ENCODE measurements at regions of chr12 and their contacts with region 1.

Region 1: DNA sequence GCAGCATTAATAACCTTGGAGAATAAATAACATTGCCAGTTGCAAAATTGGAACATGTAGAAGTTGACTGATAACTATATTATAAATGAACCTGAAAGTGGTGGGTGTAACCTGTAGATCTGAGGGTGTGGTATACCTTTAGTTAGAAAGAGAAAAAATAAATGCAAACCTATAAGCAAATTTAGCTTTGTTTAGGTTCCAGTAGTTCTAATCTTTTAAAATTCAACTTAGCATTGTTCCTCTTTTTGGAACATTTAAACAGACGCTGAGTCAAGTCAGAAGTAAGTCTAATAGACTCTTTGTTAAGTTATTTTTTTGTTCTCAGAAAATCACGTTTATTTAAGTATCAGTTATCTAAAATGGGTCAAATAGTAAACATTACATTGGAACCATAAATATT is 120.0 kb downstream of the DNAI7 start:
- DNase-seq: no peak
- ATAC-seq: no peak
- H3K4me3 ChIP-seq: no peak overlapping the region
- H3K4me3 Mint-ChIP-seq: no peak overlapping the region
- H3K27ac ChIP-seq: no peak overlapping the region
- H3K27ac Mint-ChIP-seq: no peak overlapping the region
- H3K4me1 ChIP-seq: peaks cover 0 to 2% of the 10 kb centered on the region in 2 experiments
- H3K4me1 Mint-ChIP-seq: peaks cover 22 to 35% (median 27%) of the 10 kb centered on the region in 3 donors
- H3K27me3 ChIP-seq: no peaks in the 10 kb centered on the region
- H3K27me3 Mint-ChIP-seq: no peaks in the 10 kb centered on the region

Region 2: DNA sequence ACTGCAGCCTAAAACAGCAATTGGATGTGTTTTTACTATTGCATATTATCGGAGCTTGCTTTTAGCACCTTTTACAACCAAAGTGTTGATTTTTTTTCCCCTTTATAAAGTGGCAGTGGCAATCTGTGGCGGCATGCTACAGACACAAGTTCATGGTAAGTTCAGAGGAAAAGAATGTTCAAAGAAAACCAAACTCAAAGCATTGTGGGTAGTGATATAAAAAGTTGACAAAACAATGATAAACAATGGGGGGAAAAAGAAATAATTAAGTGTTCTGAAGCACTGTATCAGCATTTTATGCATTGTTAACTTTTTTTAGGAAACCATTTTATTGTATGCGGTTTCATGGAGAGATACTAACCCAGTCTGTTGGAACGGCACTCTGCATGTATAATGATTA is 633.5 kb before region 1 on chr12:
- CTCF ChIA-PET with region 1: no interaction called
- POLR2A ChIA-PET with region 1: no interaction called
- DNase-seq: no peak
- ATAC-seq: no peak
- H3K4me3 ChIP-seq: no peak overlapping the region
- H3K4me3 Mint-ChIP-seq: no peak overlapping the region
- H3K27ac ChIP-seq: no peak overlapping the region
- H3K27ac Mint-ChIP-seq: no peak overlapping the region
- H3K4me1 ChIP-seq: no peaks in the 10 kb centered on the region
- H3K4me1 Mint-ChIP-seq: no peaks in the 10 kb centered on the region
- H3K27me3 ChIP-seq: no peaks in the 10 kb centered on the region
- H3K27me3 Mint-ChIP-seq: peaks cover 0 to 2% of the 10 kb centered on the region in 2 donors

Region 3: GRCh38 chr12:25014961-25015360 is 60.0 kb before region 1 on chr12:
- CTCF ChIA-PET with region 1: no interaction called
- POLR2A ChIA-PET with region 1: interaction called in 1 of 2 experiments, 13 read pairs
- DNase-seq: no peak
- ATAC-seq: no peak
- H3K4me3 ChIP-seq: no peak overlapping the region
- H3K4me3 Mint-ChIP-seq: no peak overlapping the region
- H3K27ac ChIP-seq: no peak overlapping the region
- H3K27ac Mint-ChIP-seq: no peak overlapping the region
- H3K4me1 ChIP-seq: no peaks in the 10 kb centered on the region
- H3K4me1 Mint-ChIP-seq: no peaks in the 10 kb centered on the region
- H3K27me3 ChIP-seq: peaks cover 0 to 7% of the 10 kb centered on the region in 2 experiments
- H3K27me3 Mint-ChIP-seq: peaks cover 0 to 2% of the 10 kb centered on the region in 2 donors

Measured in T-cell (primary cell).